CD4-positive, alpha-beta memory T cell (primary cell): ENCODE measurements at regions of chr15 and their contacts with region 1.

Region 1: GRCh38 chr15:38563723-38564519 is 693 bp downstream of the RASGRP1 start:
- DNase-seq: peak; percentile 82 to 89 (median 84)
- H3K4me3 ChIP-seq: peak overlapping the region; percentile 95 to 97
- H3K4me3 Mint-ChIP-seq: peak overlapping the region; percentile 94 to 99 (median 98)
- H3K27ac ChIP-seq: peak overlapping the region; percentile 89
- H3K27ac Mint-ChIP-seq: peak overlapping the region; percentile 79 to 97 (median 95)
- H3K4me1 ChIP-seq: peaks cover 64% of the 10 kb centered on the region
- H3K4me1 Mint-ChIP-seq: peaks cover 44 to 78% (median 60%) of the 10 kb centered on the region in 4 donors
- H3K27me3 ChIP-seq: no peaks in the 10 kb centered on the region
- H3K27me3 Mint-ChIP-seq: no peaks in the 10 kb centered on the region

Region 2: GRCh38 chr15:38378161-38378560 is 185.8 kb before region 1 on chr15:
- CTCF ChIA-PET with region 1: no interaction called
- POLR2A ChIA-PET with region 1: no interaction called
- intact Hi-C with region 1: no loop called
- DNase-seq: no peak
- H3K4me3 ChIP-seq: no peak overlapping the region
- H3K4me3 Mint-ChIP-seq: no peak overlapping the region
- H3K27ac ChIP-seq: no peak overlapping the region
- H3K27ac Mint-ChIP-seq: no peak overlapping the region
- H3K4me1 ChIP-seq: no peaks in the 10 kb centered on the region
- H3K4me1 Mint-ChIP-seq: no peaks in the 10 kb centered on the region
- H3K27me3 ChIP-seq: no peaks in the 10 kb centered on the region
- H3K27me3 Mint-ChIP-seq: peaks cover 22 to 39% of the 10 kb centered on the region in 2 donors

Region 3: DNA sequence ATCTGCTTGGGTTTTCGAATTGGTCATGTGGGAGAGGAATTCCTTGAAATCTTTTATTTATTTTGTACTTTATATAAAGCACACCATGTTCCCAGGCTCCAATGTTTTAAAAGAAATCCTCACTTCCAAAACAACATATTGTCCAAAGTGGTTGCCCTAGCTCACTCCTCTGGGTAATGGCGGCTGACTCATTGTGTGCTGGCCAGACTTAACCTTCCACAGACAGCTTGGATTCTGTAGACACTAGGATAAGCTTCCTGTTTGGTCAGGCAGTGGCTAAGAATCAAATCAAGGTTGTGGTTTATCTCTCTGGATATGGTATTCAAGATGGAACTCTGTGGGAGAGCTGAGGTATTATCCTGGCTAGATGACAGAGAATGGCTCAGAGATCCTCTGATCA is 165.8 kb before region 1 on chr15:
- CTCF ChIA-PET with region 1: no interaction called
- POLR2A ChIA-PET with region 1: no interaction called
- intact Hi-C with region 1: no loop called
- DNase-seq: no peak
- H3K4me3 ChIP-seq: no peak overlapping the region
- H3K4me3 Mint-ChIP-seq: no peak overlapping the region
- H3K27ac ChIP-seq: no peak overlapping the region
- H3K27ac Mint-ChIP-seq: no peak overlapping the region
- H3K4me1 ChIP-seq: no peaks in the 10 kb centered on the region
- H3K4me1 Mint-ChIP-seq: no peaks in the 10 kb centered on the region
- H3K27me3 ChIP-seq: no peaks in the 10 kb centered on the region
- H3K27me3 Mint-ChIP-seq: peaks cover 29 to 38% of the 10 kb centered on the region in 2 donors

Region 4: DNA sequence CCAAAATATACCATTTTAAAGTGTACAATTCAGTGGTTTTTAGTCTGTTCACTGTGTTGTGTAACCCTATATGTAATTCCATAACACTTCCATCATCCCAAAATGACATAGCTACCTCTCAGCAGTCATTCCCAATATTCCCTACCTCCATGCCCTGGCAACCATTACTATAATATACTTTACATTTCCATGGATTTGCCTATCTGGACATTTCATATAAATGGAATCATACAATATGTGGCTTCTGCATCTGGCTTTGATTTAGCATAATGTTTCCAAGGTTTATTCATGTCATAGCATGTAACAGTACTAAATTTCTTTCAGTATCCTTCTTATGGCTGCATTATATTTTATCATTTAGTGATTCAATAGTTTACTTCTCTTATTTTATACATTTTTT is 84.7 kb before region 1 on chr15:
- CTCF ChIA-PET with region 1: interaction called, 26 read pairs
- POLR2A ChIA-PET with region 1: interaction called, 5 read pairs
- intact Hi-C with region 1: loop called (anchors 1 kb)
- DNase-seq: no peak
- H3K4me3 ChIP-seq: no peak overlapping the region
- H3K4me3 Mint-ChIP-seq: no peak overlapping the region
- H3K27ac ChIP-seq: no peak overlapping the region
- H3K27ac Mint-ChIP-seq: peak overlapping the region in 3 of 7 donors; percentile 37 to 70 (median 48)
- H3K4me1 ChIP-seq: peaks cover 22% of the 10 kb centered on the region
- H3K4me1 Mint-ChIP-seq: peaks cover 21 to 32% (median 29%) of the 10 kb centered on the region in 4 donors
- H3K27me3 ChIP-seq: no peaks in the 10 kb centered on the region
- H3K27me3 Mint-ChIP-seq: no peaks in the 10 kb centered on the region

Region 5: DNA sequence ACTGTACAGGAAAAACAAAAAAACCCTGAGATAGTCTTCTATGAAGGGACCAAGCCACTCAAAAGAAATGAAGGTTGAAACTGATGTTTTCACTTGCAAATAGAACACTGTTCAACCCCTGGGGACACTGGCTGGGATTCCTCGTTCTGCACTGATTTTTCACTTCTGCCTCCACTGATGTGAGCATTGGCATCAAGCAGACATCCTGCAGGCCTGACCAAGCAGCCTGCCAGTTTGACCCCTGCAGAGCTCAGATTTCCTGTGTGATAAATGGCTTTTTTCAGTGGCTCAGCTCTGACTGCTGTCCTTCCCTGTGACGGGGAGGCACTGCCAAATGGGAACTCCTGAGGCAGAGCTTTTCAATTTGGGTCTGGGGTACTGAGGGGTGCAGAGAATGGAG is 49.3 kb before region 1 on chr15:
- CTCF ChIA-PET with region 1: interaction called, 9 read pairs
- POLR2A ChIA-PET with region 1: interaction called, 7 read pairs
- intact Hi-C with region 1: loop called (anchors 5 kb)
- DNase-seq: no peak
- H3K4me3 ChIP-seq: no peak overlapping the region
- H3K4me3 Mint-ChIP-seq: no peak overlapping the region
- H3K27ac ChIP-seq: no peak overlapping the region
- H3K27ac Mint-ChIP-seq: peak overlapping the region; percentile 15 to 90 (median 72)
- H3K4me1 ChIP-seq: peaks cover 7% of the 10 kb centered on the region
- H3K4me1 Mint-ChIP-seq: peaks cover 12 to 24% (median 19%) of the 10 kb centered on the region in 4 donors
- H3K27me3 ChIP-seq: no peaks in the 10 kb centered on the region
- H3K27me3 Mint-ChIP-seq: no peaks in the 10 kb centered on the region

Region 6: DNA sequence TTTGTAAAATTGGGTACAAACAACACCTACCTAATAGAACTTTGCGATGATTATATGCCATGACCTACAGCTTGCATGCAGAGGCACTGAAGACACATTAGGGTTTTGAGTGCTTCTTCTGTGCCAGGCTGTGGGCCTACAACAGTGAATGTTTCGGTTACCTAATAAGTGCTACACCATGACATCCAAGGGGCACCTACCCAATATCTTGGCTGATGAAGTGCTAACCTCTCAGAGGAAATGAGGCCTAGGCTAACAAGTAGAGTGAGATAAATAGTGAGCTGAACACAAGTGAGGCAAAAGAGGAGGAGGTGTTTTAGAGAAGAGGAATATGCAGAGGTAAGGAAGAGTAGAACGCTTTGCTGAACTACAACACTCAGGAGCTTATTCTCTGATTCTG is 12.9 kb after region 1 on chr15:
- CTCF ChIA-PET with region 1: interaction called, 14 read pairs
- POLR2A ChIA-PET with region 1: interaction called, 19 read pairs
- intact Hi-C with region 1: no loop called
- DNase-seq: no peak
- H3K4me3 ChIP-seq: no peak overlapping the region
- H3K4me3 Mint-ChIP-seq: peak overlapping the region in 7 of 8 donors; percentile 29 to 76 (median 64)
- H3K27ac ChIP-seq: peak overlapping the region; percentile 20
- H3K27ac Mint-ChIP-seq: peak overlapping the region in 6 of 7 donors; percentile 0 to 76 (median 48)
- H3K4me1 ChIP-seq: peaks cover 29% of the 10 kb centered on the region
- H3K4me1 Mint-ChIP-seq: peaks cover 18 to 34% (median 27%) of the 10 kb centered on the region in 4 donors
- H3K27me3 ChIP-seq: no peaks in the 10 kb centered on the region
- H3K27me3 Mint-ChIP-seq: no peaks in the 10 kb centered on the region

Region 7: DNA sequence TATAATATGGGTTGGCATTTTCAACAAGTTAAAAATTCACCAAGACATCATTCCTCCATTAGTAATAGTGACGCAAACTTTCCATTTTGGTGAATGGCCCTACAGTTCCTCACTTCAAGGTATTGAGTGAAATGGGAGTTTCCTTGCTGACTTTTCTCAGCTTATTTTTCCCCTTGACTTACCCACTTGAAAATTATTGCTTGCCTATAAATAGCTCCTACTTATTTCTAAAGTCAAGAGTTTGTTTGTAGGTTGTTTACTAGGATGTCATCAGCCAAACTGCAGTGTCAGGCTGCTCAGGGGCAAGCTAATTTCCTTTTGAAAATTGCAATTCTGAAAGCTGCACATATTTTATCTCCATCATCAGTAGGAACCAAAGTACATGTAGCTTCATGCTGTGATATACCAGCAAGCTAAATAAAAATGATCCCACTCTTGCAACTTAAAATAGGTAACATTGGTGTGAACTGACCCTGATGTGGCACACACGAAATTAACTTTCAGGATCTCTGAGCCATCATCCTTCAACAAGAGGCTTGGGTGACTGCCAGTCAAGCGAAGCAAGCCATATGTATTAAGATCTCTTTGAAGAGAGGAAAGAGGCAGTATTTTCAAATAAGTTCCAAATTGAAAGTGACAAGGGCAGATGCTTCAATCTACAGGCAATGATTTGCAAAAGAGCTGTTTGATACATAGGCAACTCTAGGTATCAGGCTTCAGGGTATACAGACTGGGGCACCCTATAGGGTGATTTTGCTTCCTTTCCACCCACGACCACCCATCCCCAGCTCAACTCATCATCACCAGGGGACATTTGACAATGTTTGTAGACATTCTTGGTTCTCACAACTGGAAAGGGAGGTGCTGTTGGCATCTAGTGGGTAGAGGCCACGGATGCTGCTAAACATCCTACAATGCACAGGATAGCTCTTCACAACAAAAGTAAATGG is 67.5 kb after region 1 on chr15:
- CTCF ChIA-PET with region 1: interaction called, 27 read pairs
- POLR2A ChIA-PET with region 1: interaction called, 6 read pairs
- intact Hi-C with region 1: no loop called
- DNase-seq: peak in 2 of 5 donors; percentile 15 to 26
- H3K4me3 ChIP-seq: no peak overlapping the region
- H3K4me3 Mint-ChIP-seq: peak overlapping the region in 7 of 8 donors; percentile 8 to 52 (median 26)
- H3K27ac ChIP-seq: no peak overlapping the region
- H3K27ac Mint-ChIP-seq: peak overlapping the region; percentile 49 to 88 (median 75)
- H3K4me1 ChIP-seq: peaks cover 25% of the 10 kb centered on the region
- H3K4me1 Mint-ChIP-seq: peaks cover 19 to 22% (median 20%) of the 10 kb centered on the region in 4 donors
- H3K27me3 ChIP-seq: no peaks in the 10 kb centered on the region
- H3K27me3 Mint-ChIP-seq: no peaks in the 10 kb centered on the region

Region 8: GRCh38 chr15:38671675-38672254 is 107.8 kb after region 1 on chr15:
- CTCF ChIA-PET with region 1: interaction called, 103 read pairs
- POLR2A ChIA-PET with region 1: interaction called, 167 read pairs
- intact Hi-C with region 1: loop called (anchors 1 kb)
- DNase-seq: peak; percentile 70 to 87 (median 78)
- H3K4me3 ChIP-seq: peak overlapping the region; percentile 1 to 24
- H3K4me3 Mint-ChIP-seq: peak overlapping the region in 7 of 8 donors; percentile 67 to 79 (median 72)
- H3K27ac ChIP-seq: peak overlapping the region; percentile 89
- H3K27ac Mint-ChIP-seq: peak overlapping the region; percentile 94 to 100 (median 99)
- H3K4me1 ChIP-seq: peaks cover 83% of the 10 kb centered on the region
- H3K4me1 Mint-ChIP-seq: peaks cover 57 to 79% (median 64%) of the 10 kb centered on the region in 4 donors
- H3K27me3 ChIP-seq: no peaks in the 10 kb centered on the region
- H3K27me3 Mint-ChIP-seq: no peaks in the 10 kb centered on the region